ENCODE measurements at regions of chr12 and their contacts with region 1.

Region 1: GRCh38 chr12:52278541-52279421 is 4.3 kb downstream of the KRT86 start:
- DNase-seq: peak; percentile 83 to 86
- H3K4me3 ChIP-seq: peak overlapping the region; percentile 78
- H3K27ac ChIP-seq: peak overlapping the region; percentile 100
- H3K4me1 ChIP-seq: peaks cover 60% of the 10 kb centered on the region
- H3K27me3 ChIP-seq: no peaks in the 10 kb centered on the region
- CTCF ChIP-seq: peak; percentile 95

Region 2: DNA sequence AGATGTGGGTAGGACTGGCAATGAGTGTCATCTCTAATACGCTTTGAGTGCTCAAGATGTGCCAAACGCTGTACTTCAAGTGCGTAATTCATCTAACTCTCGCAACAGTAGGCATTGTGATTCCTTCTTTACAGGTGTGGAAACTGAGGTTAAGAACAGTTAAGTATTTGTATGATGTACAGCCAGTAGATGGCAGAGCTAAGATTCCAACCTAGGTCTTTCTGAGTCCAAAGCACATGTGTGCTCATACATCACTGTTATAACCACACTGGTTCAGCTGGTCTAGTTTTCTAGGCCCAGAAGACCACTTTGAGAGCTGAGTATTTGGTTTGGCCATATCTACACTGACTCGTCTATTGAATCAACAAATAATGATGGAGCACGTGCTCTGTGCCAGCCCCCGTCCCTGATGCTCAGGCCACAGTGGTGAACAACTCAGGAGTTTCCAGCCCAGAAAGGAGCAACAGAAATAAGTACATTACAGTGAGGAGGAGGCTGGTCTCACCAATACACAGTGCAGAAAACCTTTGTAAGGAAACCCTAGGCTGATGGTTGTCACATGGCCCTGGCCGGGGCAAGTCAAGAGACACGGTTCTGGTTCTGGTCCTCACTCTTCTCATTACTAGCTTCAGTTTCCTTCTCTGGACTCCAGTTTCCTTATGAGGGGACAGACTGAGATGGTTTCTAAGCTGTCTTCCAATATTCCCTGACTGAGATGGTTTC is 757.1 kb before region 1 on chr12:
- CTCF ChIA-PET with region 1: no interaction called
- POLR2A ChIA-PET with region 1: no interaction called
- intact Hi-C with region 1: no loop called
- DNase-seq: no peak
- H3K4me3 ChIP-seq: no peak overlapping the region
- H3K27ac ChIP-seq: no peak overlapping the region
- H3K4me1 ChIP-seq: no peaks in the 10 kb centered on the region
- H3K27me3 ChIP-seq: no peaks in the 10 kb centered on the region
- CTCF ChIP-seq: no peak

Region 3: GRCh38 chr12:52213512-52214420 is 65.0 kb before region 1 on chr12:
- CTCF ChIA-PET with region 1: interaction called, 3 read pairs
- POLR2A ChIA-PET with region 1: interaction called, 10 read pairs
- intact Hi-C with region 1: loop called (anchors 1 kb)
- DNase-seq: peak; percentile 79 to 93
- H3K4me3 ChIP-seq: no peak overlapping the region
- H3K27ac ChIP-seq: peak overlapping the region; percentile 85
- H3K4me1 ChIP-seq: peaks cover 56% of the 10 kb centered on the region
- H3K27me3 ChIP-seq: no peaks in the 10 kb centered on the region
- CTCF ChIP-seq: peak; percentile 98

Region 4: DNA sequence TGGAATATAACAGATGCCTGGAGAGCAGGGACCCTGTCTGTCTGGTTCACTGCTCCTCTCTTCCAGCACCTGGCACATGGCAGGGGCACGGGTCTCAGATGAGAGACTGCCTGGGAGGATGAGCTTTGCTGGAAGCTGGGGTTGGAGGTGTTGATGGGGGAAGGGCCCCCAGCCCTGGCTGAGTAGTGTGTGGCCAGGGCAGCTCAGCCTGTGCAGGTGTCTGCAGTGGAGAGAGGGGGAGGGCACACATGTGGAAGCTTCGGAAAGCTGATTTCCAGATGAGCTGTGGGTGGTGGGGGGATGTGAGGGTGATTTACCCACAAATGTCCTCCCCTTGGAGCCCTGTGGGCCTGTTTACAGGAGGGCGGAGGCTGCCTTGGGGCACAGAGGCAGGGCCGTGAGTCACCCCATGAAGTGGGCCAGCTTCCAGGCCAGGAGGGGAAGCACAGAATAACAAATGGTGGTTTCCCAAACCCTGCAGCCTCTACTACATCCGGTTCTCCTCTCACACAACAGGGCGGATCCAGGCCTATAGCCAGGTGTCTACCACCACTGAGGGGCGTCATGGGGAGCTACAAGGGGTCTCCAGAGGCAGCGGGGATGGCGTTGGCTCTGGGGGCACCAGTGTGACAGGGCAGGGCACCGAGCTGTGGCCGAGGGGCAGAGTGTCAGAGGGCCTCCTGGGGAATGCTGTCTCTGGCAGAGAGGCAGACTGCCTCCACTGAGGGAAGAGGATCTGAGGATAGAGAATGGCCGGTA is 34.7 kb before region 1 on chr12:
- CTCF ChIA-PET with region 1: interaction called, 23 read pairs
- POLR2A ChIA-PET with region 1: interaction called, 34 read pairs
- intact Hi-C with region 1: loop called (anchors 2 kb)
- DNase-seq: peak; percentile 89 to 95
- H3K4me3 ChIP-seq: 0 out of 2 replicates have a peak overlapping the region, but pooled peaks have one; percentile 7
- H3K27ac ChIP-seq: peak overlapping the region; percentile 90
- H3K4me1 ChIP-seq: peaks cover 99% of the 10 kb centered on the region
- H3K27me3 ChIP-seq: no peaks in the 10 kb centered on the region
- CTCF ChIP-seq: no peak; the same call in 1 of the 2 replicates

Region 5: DNA sequence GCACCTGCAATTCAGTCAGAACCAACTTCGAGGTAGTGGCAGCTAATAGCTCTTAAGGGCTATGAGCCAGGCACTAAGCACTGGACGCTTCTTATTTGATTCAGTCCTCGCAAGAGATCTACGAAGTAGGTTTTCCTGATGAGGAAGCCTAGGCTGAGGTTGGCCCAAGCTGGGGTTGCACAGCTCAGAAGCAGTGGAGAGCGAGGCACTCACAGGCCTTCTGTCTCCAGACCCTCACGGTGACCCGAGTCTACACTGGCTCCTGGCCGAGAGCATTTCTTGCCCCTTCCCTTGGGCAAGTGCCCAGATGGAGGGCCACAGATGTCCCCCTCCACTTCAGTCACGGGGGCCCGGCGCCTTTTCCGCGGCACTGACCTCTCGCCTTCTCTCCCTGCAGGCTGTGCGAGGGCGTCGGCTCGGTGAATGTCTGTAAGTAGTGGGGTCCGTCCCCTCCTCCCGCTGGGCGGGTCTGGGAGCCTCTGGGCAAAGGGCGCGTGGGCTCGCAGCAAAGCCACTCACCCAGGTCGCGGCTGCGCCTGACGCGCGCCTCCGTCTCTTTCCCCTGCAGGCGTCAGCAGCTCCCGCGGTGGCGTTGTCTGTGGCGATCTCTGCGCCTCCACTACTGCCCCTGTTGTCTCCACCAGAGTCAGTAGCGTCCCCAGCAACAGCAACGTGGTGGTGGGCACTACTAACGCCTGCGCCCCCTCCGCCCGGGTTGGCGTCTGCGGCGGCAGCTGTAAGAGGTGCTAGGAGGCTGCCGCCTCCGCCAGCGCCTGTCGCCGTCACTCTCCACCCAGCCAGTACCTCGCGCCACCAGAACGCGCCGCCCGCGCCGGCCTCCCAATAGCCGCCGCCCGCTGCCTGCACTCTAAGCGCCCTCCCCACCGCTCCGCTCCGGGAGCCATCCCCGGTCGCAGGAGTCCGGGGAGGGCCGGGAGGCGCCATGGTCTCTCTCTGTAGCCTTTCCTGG is 29.3 kb after region 1 on chr12:
- CTCF ChIA-PET with region 1: interaction called, 6 read pairs
- POLR2A ChIA-PET with region 1: interaction called, 13 read pairs
- intact Hi-C with region 1: no loop called
- DNase-seq: peak; percentile 49 to 75
- H3K4me3 ChIP-seq: peak overlapping the region; percentile 71
- H3K27ac ChIP-seq: no peak overlapping the region
- H3K4me1 ChIP-seq: peaks cover 19% of the 10 kb centered on the region
- H3K27me3 ChIP-seq: no peaks in the 10 kb centered on the region
- CTCF ChIP-seq: no peak

Region 6: DNA sequence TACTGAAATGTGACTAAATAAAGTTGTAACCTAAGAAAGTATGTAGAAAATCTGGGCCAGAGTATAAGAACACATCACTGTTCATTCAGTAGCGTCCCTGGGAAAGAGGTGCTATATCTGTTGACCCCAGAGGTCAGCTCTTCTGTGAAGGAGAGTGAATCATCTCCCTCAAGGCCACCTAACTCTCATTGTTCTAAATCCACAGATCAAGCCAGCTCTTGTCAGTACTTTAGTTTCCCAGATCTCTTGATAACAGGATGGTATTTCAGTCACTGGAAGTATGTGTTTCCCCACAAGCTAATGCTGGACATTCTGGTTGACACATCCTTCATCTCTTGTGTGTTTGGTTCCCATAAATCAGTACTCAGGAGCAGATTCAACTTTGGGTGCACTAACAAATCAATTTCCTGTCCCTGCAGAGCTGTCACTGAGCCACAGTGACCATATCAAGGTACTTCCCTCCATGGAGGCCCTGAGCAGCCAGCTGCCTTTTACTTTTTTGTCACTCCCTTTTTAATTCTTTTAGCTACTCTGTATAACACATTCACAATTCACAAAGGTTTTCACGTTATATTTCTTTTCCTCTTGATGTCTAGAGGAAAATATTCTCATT is 393.6 kb after region 1 on chr12:
- CTCF ChIA-PET with region 1: no interaction called
- POLR2A ChIA-PET with region 1: no interaction called
- intact Hi-C with region 1: loop called (anchors 5 kb)
- DNase-seq: peak; percentile 55 to 98
- H3K4me3 ChIP-seq: no peak overlapping the region
- H3K27ac ChIP-seq: peak overlapping the region; percentile 86
- H3K4me1 ChIP-seq: peaks cover 35% of the 10 kb centered on the region
- H3K27me3 ChIP-seq: no peaks in the 10 kb centered on the region
- CTCF ChIP-seq: no peak